CD4-positive, alpha-beta memory T cell (primary cell): ENCODE measurements at regions of chr21 and their contacts with region 1.

Region 1: GRCh38 chr21:33947451-33948095 is 32.0 kb upstream of the ATP5PO start:
- DNase-seq: peak; percentile 86 to 97 (median 91)
- H3K4me3 ChIP-seq: peak overlapping the region; percentile 21 to 36
- H3K4me3 Mint-ChIP-seq: peak overlapping the region; percentile 49 to 94 (median 85)
- H3K27ac ChIP-seq: peak overlapping the region; percentile 94
- H3K27ac Mint-ChIP-seq: peak overlapping the region; percentile 92 to 99 (median 98)
- H3K4me1 ChIP-seq: peaks cover 79% of the 10 kb centered on the region
- H3K4me1 Mint-ChIP-seq: peaks cover 58 to 90% (median 68%) of the 10 kb centered on the region in 4 donors
- H3K27me3 ChIP-seq: no peaks in the 10 kb centered on the region
- H3K27me3 Mint-ChIP-seq: no peaks in the 10 kb centered on the region

Region 2: GRCh38 chr21:33915368-33916199 is 32.0 kb before region 1 on chr21 and contains the start of gene ATP5PO:
- CTCF ChIA-PET with region 1: interaction called, 3 read pairs
- POLR2A ChIA-PET with region 1: interaction called, 10 read pairs
- intact Hi-C with region 1: loop called (anchors 1 kb)
- DNase-seq: peak; percentile 94 to 96 (median 94)
- H3K4me3 ChIP-seq: peak within 1 kb of the TSS; percentile 90
- H3K4me3 Mint-ChIP-seq: peak within 1 kb of the TSS; percentile 97 to 99 (median 98)
- H3K27ac ChIP-seq: peak within 1 kb of the TSS; percentile 91
- H3K27ac Mint-ChIP-seq: peak within 1 kb of the TSS; percentile 92 to 99 (median 99)
- H3K4me1 ChIP-seq: peaks cover 35% of the 10 kb centered on the region
- H3K4me1 Mint-ChIP-seq: peaks cover 17 to 34% (median 28%) of the 10 kb centered on the region in 4 donors
- H3K27me3 ChIP-seq: no peaks in the 10 kb centered on the region
- H3K27me3 Mint-ChIP-seq: no peaks in the 10 kb centered on the region
- total RNA-seq, gene ATP5PO: 126 to 143 TPM

Region 3: GRCh38 chr21:33959680-33960079 is 12.1 kb after region 1 on chr21:
- CTCF ChIA-PET with region 1: interaction called, 7 read pairs
- POLR2A ChIA-PET with region 1: interaction called, 938 read pairs
- intact Hi-C with region 1: no loop called
- DNase-seq: no peak
- H3K4me3 ChIP-seq: no peak overlapping the region
- H3K4me3 Mint-ChIP-seq: no peak overlapping the region
- H3K27ac ChIP-seq: no peak overlapping the region
- H3K27ac Mint-ChIP-seq: no peak overlapping the region
- H3K4me1 ChIP-seq: peaks cover 10% of the 10 kb centered on the region
- H3K4me1 Mint-ChIP-seq: peaks cover 12 to 49% (median 22%) of the 10 kb centered on the region in 4 donors
- H3K27me3 ChIP-seq: no peaks in the 10 kb centered on the region
- H3K27me3 Mint-ChIP-seq: no peaks in the 10 kb centered on the region

Region 4: GRCh38 chr21:33998402-33998801 is 50.8 kb after region 1 on chr21:
- CTCF ChIA-PET with region 1: interaction called, 5 read pairs
- POLR2A ChIA-PET with region 1: interaction called, 11 read pairs
- intact Hi-C with region 1: loop called (anchors 5 kb)
- DNase-seq: peak in 3 of 5 donors; percentile 15 to 20 (median 19)
- H3K4me3 ChIP-seq: no peak overlapping the region
- H3K4me3 Mint-ChIP-seq: no peak overlapping the region
- H3K27ac ChIP-seq: no peak overlapping the region
- H3K27ac Mint-ChIP-seq: peak overlapping the region in 3 of 7 donors; percentile 27 to 75 (median 31)
- H3K4me1 ChIP-seq: peaks cover 16% of the 10 kb centered on the region
- H3K4me1 Mint-ChIP-seq: peaks cover 15 to 27% (median 19%) of the 10 kb centered on the region in 4 donors
- H3K27me3 ChIP-seq: no peaks in the 10 kb centered on the region
- H3K27me3 Mint-ChIP-seq: no peaks in the 10 kb centered on the region

Region 5: DNA sequence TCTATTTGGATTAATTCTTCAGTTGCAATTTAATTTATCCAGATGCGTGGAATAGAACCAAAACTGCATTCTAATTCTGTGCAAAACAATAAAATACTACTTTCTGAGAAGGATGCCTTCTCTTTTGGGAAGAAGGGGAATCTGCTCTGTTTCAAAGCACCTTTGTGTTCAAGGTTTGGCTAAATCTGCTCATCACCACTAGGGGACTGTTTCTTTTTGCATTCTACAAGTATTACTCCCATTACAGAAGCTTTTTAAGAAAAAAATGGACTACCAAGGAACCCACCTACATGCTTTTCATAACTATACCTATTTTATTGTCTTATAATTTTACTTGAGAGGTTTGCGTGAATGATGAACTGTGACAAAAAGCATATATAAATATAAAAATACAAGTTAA is 144.0 kb after region 1 on chr21:
- CTCF ChIA-PET with region 1: interaction called, 3 read pairs
- POLR2A ChIA-PET with region 1: interaction called, 12 read pairs
- intact Hi-C with region 1: no loop called
- DNase-seq: no peak
- H3K4me3 ChIP-seq: no peak overlapping the region
- H3K4me3 Mint-ChIP-seq: peak overlapping the region in 3 of 8 donors; percentile 7 to 62 (median 11)
- H3K27ac ChIP-seq: no peak overlapping the region
- H3K27ac Mint-ChIP-seq: peak overlapping the region in 2 of 7 donors; percentile 30 to 41
- H3K4me1 ChIP-seq: peaks cover 58% of the 10 kb centered on the region
- H3K4me1 Mint-ChIP-seq: peaks cover 39 to 57% (median 45%) of the 10 kb centered on the region in 4 donors
- H3K27me3 ChIP-seq: no peaks in the 10 kb centered on the region
- H3K27me3 Mint-ChIP-seq: no peaks in the 10 kb centered on the region

Region 6: GRCh38 chr21:34176448-34176847 is 228.9 kb after region 1 on chr21:
- CTCF ChIA-PET with region 1: no interaction called
- POLR2A ChIA-PET with region 1: no interaction called
- intact Hi-C with region 1: no loop called
- DNase-seq: no peak
- H3K4me3 ChIP-seq: no peak overlapping the region
- H3K4me3 Mint-ChIP-seq: no peak overlapping the region
- H3K27ac ChIP-seq: no peak overlapping the region
- H3K27ac Mint-ChIP-seq: no peak overlapping the region
- H3K4me1 ChIP-seq: no peaks in the 10 kb centered on the region
- H3K4me1 Mint-ChIP-seq: no peaks in the 10 kb centered on the region
- H3K27me3 ChIP-seq: no peaks in the 10 kb centered on the region
- H3K27me3 Mint-ChIP-seq: no peaks in the 10 kb centered on the region

Region 7: GRCh38 chr21:34351786-34352241 is 404.2 kb after region 1 on chr21:
- CTCF ChIA-PET with region 1: interaction called, 13 read pairs
- POLR2A ChIA-PET with region 1: interaction called, 14 read pairs
- intact Hi-C with region 1: no loop called
- DNase-seq: peak in 2 of 5 donors; percentile 2 to 15
- H3K4me3 ChIP-seq: no peak overlapping the region
- H3K4me3 Mint-ChIP-seq: no peak overlapping the region
- H3K27ac ChIP-seq: no peak overlapping the region
- H3K27ac Mint-ChIP-seq: no peak overlapping the region
- H3K4me1 ChIP-seq: no peaks in the 10 kb centered on the region
- H3K4me1 Mint-ChIP-seq: peaks cover 4 to 6% (median 5%) of the 10 kb centered on the region in 4 donors
- H3K27me3 ChIP-seq: no peaks in the 10 kb centered on the region
- H3K27me3 Mint-ChIP-seq: peaks cover 19 to 20% of the 10 kb centered on the region in 2 donors